PC-3 (cell line): ENCODE measurements at regions of chr20 and their contacts with region 1.

Region 1: DNA sequence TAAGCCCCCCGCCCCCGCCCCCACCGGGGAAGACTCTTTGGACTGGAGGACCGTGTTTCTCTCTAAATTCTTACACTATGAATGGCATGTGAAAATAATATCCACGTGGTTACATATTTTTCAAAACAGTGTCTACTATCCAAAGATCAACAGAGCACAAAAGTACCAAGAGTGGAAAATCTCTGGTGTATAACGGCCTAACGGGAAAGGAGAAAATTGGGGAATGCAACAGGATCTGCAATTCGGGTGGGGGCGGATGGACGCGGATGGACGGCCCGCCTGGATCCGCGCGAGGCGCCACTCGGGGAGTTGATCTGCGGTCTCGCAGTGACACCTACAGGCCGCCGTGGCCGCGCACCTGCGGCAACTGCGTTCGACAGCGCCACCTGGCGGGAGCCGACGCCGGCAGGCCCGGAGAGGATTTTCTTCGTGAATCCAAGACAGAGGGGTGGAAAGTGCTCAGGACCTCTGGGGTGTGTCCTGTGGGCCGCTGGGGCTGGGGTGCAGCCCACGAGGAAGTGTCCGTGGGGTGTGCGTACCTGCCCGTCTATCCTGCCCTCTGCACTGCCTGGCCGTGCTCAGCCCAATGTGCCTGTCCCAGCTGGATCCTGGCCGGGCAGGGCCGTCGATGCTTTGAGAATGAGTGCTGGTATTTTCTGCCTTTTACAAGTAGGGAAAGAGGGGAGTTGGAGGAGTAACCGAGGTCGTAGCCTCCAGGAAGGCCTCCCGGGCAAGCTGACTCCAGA is 18.6 kb downstream of the ANKRD60 start:
- DNase-seq: peak; percentile 94
- ATAC-seq: peak; percentile 89
- H3K4me3 ChIP-seq: peak overlapping the region; percentile 54
- H3K27ac ChIP-seq: no peak overlapping the region
- H3K4me1 ChIP-seq: peaks cover 6% of the 10 kb centered on the region; the same call in 1 of the 2 replicates
- H3K27me3 ChIP-seq: no peaks in the 10 kb centered on the region
- CTCF ChIP-seq: peak; percentile 100

Region 2: DNA sequence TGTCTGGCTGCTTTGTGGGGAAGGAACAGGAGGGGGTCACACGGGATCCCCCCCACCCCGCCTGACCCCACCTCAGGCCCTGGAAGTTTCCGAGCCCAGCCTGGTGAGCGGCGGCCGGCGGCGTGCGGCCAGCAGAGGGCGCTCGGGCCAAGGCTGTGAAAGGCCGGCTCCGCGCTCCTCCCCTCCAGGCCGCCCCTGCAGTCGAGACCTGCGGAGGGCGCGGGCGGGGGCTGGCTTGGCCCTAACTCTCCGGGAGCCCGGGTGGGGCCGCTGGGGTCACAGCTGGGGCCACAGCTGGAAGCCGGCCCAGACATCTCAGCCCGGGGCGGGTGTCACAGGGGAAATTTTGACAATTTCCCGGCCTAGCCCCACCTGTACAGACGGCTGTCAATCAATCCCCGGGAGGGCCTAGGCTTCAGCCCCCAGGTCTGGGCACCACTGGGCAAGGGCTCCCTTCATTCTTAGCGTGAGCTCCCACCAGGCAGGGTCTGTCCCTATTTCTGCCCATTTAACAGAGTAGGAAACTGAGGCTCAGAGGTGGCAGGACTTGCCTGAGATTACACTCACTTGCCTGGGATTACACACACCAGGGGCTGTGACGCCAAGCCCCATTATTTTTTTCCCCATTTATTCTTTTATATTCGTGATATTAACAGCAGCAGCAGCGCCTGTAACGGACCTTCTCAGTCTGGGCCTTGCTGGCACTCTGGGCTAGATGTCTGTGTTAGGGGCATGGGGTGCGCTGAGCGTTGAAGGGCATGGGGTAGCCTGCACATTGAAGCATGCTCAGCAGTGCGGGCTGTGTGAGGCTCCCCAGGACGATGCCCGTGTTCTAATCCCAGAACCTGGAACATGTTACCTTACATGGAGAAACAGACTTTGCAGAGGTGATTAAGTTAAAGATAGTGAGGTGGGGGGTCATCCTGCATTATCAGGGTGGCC is 612.6 kb before region 1 on chr20:
- CTCF ChIA-PET with region 1: interaction called, 3 read pairs
- POLR2A ChIA-PET with region 1: no interaction called
- intact Hi-C with region 1: loop called (anchors 1 kb)
- DNase-seq: peak; percentile 72
- ATAC-seq: peak; percentile 79
- H3K4me3 ChIP-seq: peak overlapping the region; percentile 62
- H3K27ac ChIP-seq: no peak overlapping the region
- H3K4me1 ChIP-seq: peaks cover 18% of the 10 kb centered on the region
- H3K27me3 ChIP-seq: no peaks in the 10 kb centered on the region
- CTCF ChIP-seq: peak; percentile 98

Region 3: GRCh38 chr20:58228484-58229197 is 18.8 kb after region 1 on chr20 and contains the start of gene ANKRD60:
- CTCF ChIA-PET with region 1: no interaction called
- POLR2A ChIA-PET with region 1: no interaction called
- intact Hi-C with region 1: no loop called
- DNase-seq: no peak
- ATAC-seq: no peak
- H3K4me3 ChIP-seq: no peak within 1 kb of the TSS
- H3K27ac ChIP-seq: no peak within 1 kb of the TSS
- H3K4me1 ChIP-seq: peaks cover 21% of the 10 kb centered on the region
- H3K27me3 ChIP-seq: no peaks in the 10 kb centered on the region
- CTCF ChIP-seq: no peak
- total RNA-seq, gene ANKRD60: not detected in 2 replicates